Aorta (tissue), 5 donors: ENCODE measurements at regions of chr4 and their contacts with region 1.

Region 1: GRCh38 chr4:107183155-107183774 is 147.2 kb upstream of the DKK2 start:
- DNase-seq: no peak
- ATAC-seq: peak; percentile 89
- H3K4me3 ChIP-seq: no peak overlapping the region
- H3K27ac ChIP-seq: no peak overlapping the region
- H3K4me1 ChIP-seq: no peaks in the 10 kb centered on the region
- H3K27me3 ChIP-seq: no peaks in the 10 kb centered on the region

Region 2: GRCh38 chr4:106986486-106986885 is 196.8 kb before region 1 on chr4:
- intact Hi-C with region 1: no loop called
- DNase-seq: no peak
- ATAC-seq: no peak
- H3K4me3 ChIP-seq: no peak overlapping the region
- H3K27ac ChIP-seq: no peak overlapping the region
- H3K4me1 ChIP-seq: no peaks in the 10 kb centered on the region
- H3K27me3 ChIP-seq: no peaks in the 10 kb centered on the region

Region 3: GRCh38 chr4:107037199-107037584 is 146.1 kb before region 1 on chr4:
- intact Hi-C with region 1: loop called in 1 of 2 experiments (anchors 5 kb)
- DNase-seq: peak; percentile 58 to 79
- ATAC-seq: peak; percentile 68
- H3K4me3 ChIP-seq: peak overlapping the region in 1 of 2 donors; percentile 53
- H3K27ac ChIP-seq: no peak overlapping the region
- H3K4me1 ChIP-seq: no peaks in the 10 kb centered on the region
- H3K27me3 ChIP-seq: no peaks in the 10 kb centered on the region

Region 4: DNA sequence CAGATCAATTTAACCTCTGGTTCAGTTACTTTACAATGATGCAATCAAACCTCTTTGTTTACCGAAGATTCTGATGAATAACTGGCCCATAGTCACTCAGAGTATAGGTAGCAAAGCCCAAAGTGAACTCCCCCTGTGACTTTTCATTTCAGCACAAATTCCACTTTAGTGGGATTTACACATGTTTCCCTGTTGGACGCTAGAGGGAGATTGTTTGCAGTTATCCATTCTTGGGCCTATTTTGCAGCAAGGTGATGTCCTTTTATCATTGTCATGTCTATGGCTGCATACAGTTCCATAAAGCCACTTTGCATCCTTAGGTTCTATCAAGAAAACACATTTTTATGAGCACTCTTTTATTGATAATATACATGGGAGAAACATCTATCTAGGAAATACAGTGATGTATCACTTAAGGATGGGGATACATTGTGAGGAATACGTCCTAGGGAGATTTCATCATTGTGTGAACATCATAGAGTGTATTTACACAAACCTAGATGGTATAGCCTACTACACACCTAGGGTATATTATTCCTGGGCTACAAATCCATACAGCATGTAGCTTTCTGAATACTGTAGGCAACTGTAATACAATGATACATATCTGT is 132.6 kb before region 1 on chr4:
- intact Hi-C with region 1: loop called (anchors 5 kb)
- DNase-seq: no peak
- ATAC-seq: no peak
- H3K4me3 ChIP-seq: no peak overlapping the region
- H3K27ac ChIP-seq: no peak overlapping the region
- H3K4me1 ChIP-seq: no peaks in the 10 kb centered on the region
- H3K27me3 ChIP-seq: no peaks in the 10 kb centered on the region

Region 5: GRCh38 chr4:107058828-107059227 is 124.4 kb before region 1 on chr4:
- intact Hi-C with region 1: loop called (anchors 5 kb)
- DNase-seq: no peak
- ATAC-seq: no peak
- H3K4me3 ChIP-seq: no peak overlapping the region
- H3K27ac ChIP-seq: no peak overlapping the region
- H3K4me1 ChIP-seq: no peaks in the 10 kb centered on the region
- H3K27me3 ChIP-seq: no peaks in the 10 kb centered on the region